Endothelial cell of umbilical vein (primary cell): ENCODE measurements at regions of chr2 and their contacts with region 1.

Region 1: DNA sequence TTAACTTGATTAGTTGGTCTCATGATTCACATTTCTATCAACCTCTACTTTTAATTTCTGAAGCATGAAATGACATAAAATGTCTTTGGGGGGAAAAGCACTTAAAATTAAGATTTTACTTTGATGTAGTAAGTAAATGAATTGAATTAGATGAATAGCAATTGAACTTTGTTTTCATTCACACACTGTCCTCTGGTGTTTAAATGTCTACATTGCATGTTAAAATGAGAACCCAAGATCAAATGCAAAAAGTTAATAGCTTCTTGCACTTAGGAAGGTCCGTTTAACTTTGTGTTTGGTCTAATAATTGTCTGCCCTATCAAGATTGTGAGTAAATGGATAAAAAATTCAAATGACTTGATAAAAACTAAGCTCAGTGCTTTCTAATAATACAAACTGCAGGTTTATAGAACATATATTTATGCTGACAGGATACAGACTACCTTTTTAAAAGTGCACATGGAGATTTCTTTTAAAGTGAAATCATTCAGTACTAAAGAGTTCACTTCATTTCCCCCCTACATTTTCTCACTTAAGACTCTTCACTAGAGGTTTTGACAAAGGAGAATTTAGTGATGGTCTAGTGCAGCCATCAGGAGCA is 156.2 kb upstream of the NABP1 start:
- DNase-seq: peak; percentile 56
- H3K4me3 ChIP-seq: no peak overlapping the region
- H3K27ac ChIP-seq: no peak overlapping the region
- H3K4me1 ChIP-seq: no peaks in the 10 kb centered on the region
- H3K27me3 ChIP-seq: peaks cover 5 to 12% of the 10 kb centered on the region in 2 experiments
- CTCF ChIP-seq: peak; percentile 36 to 49
- POLR2A ChIP-seq: no peak

Region 2: GRCh38 chr2:190062053-190062452 is 1459.7 kb before region 1 on chr2:
- CTCF ChIA-PET with region 1: no interaction called
- POLR2A ChIA-PET with region 1: no interaction called
- dilution Hi-C with region 1: no loop called
- intact Hi-C with region 1: no loop called
- DNase-seq: no peak
- H3K4me3 ChIP-seq: no peak overlapping the region
- H3K27ac ChIP-seq: no peak overlapping the region
- H3K4me1 ChIP-seq: no peaks in the 10 kb centered on the region
- H3K27me3 ChIP-seq: no peaks in the 10 kb centered on the region
- CTCF ChIP-seq: no peak
- POLR2A ChIP-seq: no peak

Region 3: DNA sequence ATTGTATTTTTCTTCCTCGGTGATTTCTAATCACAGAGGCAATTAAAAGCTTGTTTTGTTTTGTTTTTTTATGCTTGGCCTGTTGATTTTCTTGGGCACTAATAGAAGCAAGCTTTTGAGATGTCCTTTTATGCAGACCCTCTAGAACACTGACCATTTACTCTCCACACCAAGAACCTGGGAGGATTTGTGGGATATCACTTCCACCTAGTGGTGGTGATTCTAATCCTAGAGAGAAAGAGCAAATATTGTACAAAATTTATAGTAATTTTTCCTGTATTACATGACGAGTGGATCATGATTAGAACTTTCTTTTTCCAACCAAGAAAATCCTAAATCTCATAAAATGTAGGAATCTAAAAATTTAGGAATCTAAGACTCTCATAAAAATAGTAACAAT is 1010.6 kb before region 1 on chr2:
- CTCF ChIA-PET with region 1: no interaction called
- POLR2A ChIA-PET with region 1: no interaction called
- dilution Hi-C with region 1: no loop called
- intact Hi-C with region 1: no loop called
- DNase-seq: peak; percentile 65
- H3K4me3 ChIP-seq: no peak overlapping the region
- H3K27ac ChIP-seq: no peak overlapping the region
- H3K4me1 ChIP-seq: no peaks in the 10 kb centered on the region
- H3K27me3 ChIP-seq: no peaks in the 10 kb centered on the region
- CTCF ChIP-seq: peak; percentile 20 to 30
- POLR2A ChIP-seq: no peak

Region 4: DNA sequence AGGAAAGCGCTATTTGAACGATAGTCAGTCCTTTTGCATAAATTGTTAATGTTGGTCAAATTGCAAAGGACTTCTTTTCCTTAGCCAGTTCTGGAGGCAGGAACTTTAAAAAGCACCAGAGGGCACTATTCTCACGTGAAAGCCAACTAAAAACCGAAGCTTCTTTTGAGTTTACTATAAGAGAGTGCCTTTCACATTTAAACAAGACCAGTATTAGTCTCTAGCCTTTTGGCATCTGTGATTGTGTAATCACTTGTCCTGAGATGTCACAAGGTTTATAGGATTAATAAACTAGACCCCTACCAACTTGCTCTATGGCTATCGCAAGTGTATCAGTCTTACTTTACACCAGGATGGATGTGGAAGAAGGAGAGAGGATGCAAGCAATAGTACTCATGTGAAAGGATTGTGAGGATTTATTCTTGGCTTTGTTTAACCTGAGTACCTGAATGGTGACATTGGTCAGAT is 356.5 kb before region 1 on chr2:
- CTCF ChIA-PET with region 1: interaction called, 253 read pairs
- POLR2A ChIA-PET with region 1: no interaction called
- dilution Hi-C with region 1: no loop called
- intact Hi-C with region 1: loop called (anchors 1 kb)
- DNase-seq: peak; percentile 68
- H3K4me3 ChIP-seq: no peak overlapping the region
- H3K27ac ChIP-seq: no peak overlapping the region
- H3K4me1 ChIP-seq: peaks cover 3% of the 10 kb centered on the region
- H3K27me3 ChIP-seq: no peaks in the 10 kb centered on the region
- CTCF ChIP-seq: peak; percentile 48 to 52
- POLR2A ChIP-seq: no peak

Region 5: GRCh38 chr2:191171708-191172355 is 349.9 kb before region 1 on chr2:
- CTCF ChIA-PET with region 1: interaction called, 253 read pairs
- POLR2A ChIA-PET with region 1: no interaction called
- dilution Hi-C with region 1: no loop called
- intact Hi-C with region 1: no loop called
- DNase-seq: peak; percentile 47
- H3K4me3 ChIP-seq: no peak overlapping the region
- H3K27ac ChIP-seq: no peak overlapping the region
- H3K4me1 ChIP-seq: peaks cover 9% of the 10 kb centered on the region
- H3K27me3 ChIP-seq: no peaks in the 10 kb centered on the region
- CTCF ChIP-seq: no peak
- POLR2A ChIP-seq: no peak

Region 6: GRCh38 chr2:191231995-191232394 is 289.7 kb before region 1 on chr2:
- CTCF ChIA-PET with region 1: interaction called, 16 read pairs
- POLR2A ChIA-PET with region 1: no interaction called
- dilution Hi-C with region 1: no loop called
- intact Hi-C with region 1: loop called (anchors 5 kb)
- DNase-seq: no peak
- H3K4me3 ChIP-seq: no peak overlapping the region
- H3K27ac ChIP-seq: no peak overlapping the region
- H3K4me1 ChIP-seq: no peaks in the 10 kb centered on the region
- H3K27me3 ChIP-seq: no peaks in the 10 kb centered on the region
- CTCF ChIP-seq: peak; percentile 9 to 12
- POLR2A ChIP-seq: no peak

Region 7: DNA sequence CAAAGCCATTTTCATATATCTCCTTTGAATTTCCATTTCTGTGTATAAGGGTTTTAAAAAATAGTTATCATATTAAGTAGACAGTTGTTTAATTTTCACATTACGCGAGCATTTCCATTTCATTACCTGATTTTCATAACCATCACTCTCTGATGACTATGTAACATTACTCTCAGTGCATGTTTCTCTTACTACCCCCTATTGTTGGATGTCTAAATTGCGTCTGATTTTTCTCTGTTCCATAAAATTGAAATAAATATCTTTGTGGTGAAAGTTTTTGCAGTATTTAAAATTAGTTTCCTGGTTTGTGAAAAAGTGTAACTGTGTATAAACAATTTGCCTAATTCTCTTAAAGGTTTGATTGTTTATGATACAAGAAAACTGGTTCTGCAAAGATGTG is 152.7 kb before region 1 on chr2:
- CTCF ChIA-PET with region 1: no interaction called
- POLR2A ChIA-PET with region 1: no interaction called
- dilution Hi-C with region 1: no loop called
- intact Hi-C with region 1: no loop called
- DNase-seq: peak; percentile 13
- H3K4me3 ChIP-seq: no peak overlapping the region
- H3K27ac ChIP-seq: no peak overlapping the region
- H3K4me1 ChIP-seq: no peaks in the 10 kb centered on the region
- H3K27me3 ChIP-seq: no peaks in the 10 kb centered on the region
- CTCF ChIP-seq: peak in 1 of 2 donors; percentile 17
- POLR2A ChIP-seq: no peak